ENCODE measurements at regions of chr3 and their contacts with region 1.

Region 1: GRCh38 chr3:4906107-4906621 is 73.1 kb upstream of the BHLHE40 start:
- DNase-seq: peak; percentile 72
- H3K4me3 Mint-ChIP-seq: no peak overlapping the region
- H3K27ac Mint-ChIP-seq: peak overlapping the region; percentile 72
- H3K4me1 Mint-ChIP-seq: peaks cover 70% of the 10 kb centered on the region
- H3K27me3 Mint-ChIP-seq: no peaks in the 10 kb centered on the region

Region 2: GRCh38 chr3:4421121-4421520 is 485.0 kb before region 1 on chr3:
- CTCF ChIA-PET with region 1: no interaction called
- POLR2A ChIA-PET with region 1: no interaction called
- intact Hi-C with region 1: loop called (anchors 5 kb)
- DNase-seq: peak; percentile 60
- H3K4me3 Mint-ChIP-seq: no peak overlapping the region
- H3K27ac Mint-ChIP-seq: peak overlapping the region; percentile 56
- H3K4me1 Mint-ChIP-seq: peaks cover 53% of the 10 kb centered on the region
- H3K27me3 Mint-ChIP-seq: no peaks in the 10 kb centered on the region

Region 3: GRCh38 chr3:4741404-4742307 is 164.5 kb before region 1 on chr3:
- CTCF ChIA-PET with region 1: no interaction called
- POLR2A ChIA-PET with region 1: no interaction called
- intact Hi-C with region 1: loop called (anchors 5 kb)
- DNase-seq: peak; percentile 52
- H3K4me3 Mint-ChIP-seq: peak overlapping the region; percentile 3
- H3K27ac Mint-ChIP-seq: peak overlapping the region; percentile 85
- H3K4me1 Mint-ChIP-seq: peaks cover 51% of the 10 kb centered on the region
- H3K27me3 Mint-ChIP-seq: no peaks in the 10 kb centered on the region

Region 4: DNA sequence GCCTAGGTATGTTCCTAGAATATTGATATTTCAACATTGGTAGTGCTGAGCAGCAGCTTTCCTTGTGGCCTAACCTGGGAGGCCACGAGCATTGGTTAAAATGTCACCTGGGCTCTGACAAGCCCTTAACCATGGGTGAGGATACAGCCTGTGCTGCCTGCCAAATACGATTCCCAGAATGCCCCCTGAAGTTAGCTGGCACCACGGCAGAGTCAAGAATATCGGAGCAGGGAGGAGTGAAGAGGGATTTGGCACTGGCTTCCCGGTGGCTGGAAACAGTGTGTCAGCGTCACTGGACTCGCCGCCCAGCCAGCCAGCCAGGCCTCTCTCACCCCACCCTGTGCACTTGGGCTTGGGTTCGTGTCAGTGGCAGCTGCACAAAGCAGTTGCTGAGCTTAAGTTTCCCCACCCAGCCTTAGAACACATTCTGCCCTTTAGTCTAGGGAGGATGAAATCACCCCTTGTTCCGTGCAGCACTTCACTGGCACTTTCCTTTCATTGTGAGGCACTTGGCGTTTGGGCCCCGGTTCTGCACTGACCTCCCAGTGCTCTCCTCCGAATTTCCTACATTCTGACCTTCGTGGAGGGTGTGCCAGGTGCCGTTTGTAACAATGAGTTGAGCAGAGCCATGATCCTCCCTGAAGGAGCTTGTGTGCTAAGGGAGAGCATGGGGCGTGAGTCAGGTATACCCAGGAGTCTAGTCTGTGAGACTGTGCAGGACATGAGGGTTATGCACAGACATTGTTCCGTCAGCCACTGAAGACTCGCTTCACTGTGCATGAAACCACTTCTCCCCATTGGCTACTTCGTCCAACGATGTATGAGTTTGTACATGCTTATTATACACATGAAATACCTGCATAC is 79.7 kb before region 1 on chr3:
- CTCF ChIA-PET with region 1: no interaction called
- POLR2A ChIA-PET with region 1: interaction called, 7 read pairs
- intact Hi-C with region 1: loop called (anchors 1 kb)
- DNase-seq: no peak
- H3K4me3 Mint-ChIP-seq: peak overlapping the region; percentile 70
- H3K27ac Mint-ChIP-seq: peak overlapping the region; percentile 85
- H3K4me1 Mint-ChIP-seq: peaks cover 94% of the 10 kb centered on the region
- H3K27me3 Mint-ChIP-seq: no peaks in the 10 kb centered on the region

Region 5: DNA sequence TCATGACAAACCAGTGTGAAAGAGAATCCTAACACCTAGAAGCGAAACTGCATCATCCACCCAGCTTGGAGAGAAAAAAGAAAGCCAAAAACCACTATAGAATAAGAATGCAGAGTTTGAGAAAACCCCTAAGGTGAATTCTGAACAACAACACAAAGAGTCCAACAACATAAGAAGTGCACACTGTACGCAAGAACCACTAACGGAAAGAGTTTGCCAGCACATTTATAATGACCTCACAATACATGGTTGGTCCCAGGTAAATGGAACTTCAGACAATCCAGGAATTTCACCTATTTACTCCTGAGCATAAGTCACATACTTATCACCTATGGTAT is 55.3 kb before region 1 on chr3:
- CTCF ChIA-PET with region 1: no interaction called
- POLR2A ChIA-PET with region 1: interaction called, 9 read pairs
- intact Hi-C with region 1: loop called (anchors 1 kb)
- DNase-seq: peak; percentile 43
- H3K4me3 Mint-ChIP-seq: peak overlapping the region; percentile 53
- H3K27ac Mint-ChIP-seq: peak overlapping the region; percentile 88
- H3K4me1 Mint-ChIP-seq: peaks cover 88% of the 10 kb centered on the region
- H3K27me3 Mint-ChIP-seq: no peaks in the 10 kb centered on the region

Region 6: DNA sequence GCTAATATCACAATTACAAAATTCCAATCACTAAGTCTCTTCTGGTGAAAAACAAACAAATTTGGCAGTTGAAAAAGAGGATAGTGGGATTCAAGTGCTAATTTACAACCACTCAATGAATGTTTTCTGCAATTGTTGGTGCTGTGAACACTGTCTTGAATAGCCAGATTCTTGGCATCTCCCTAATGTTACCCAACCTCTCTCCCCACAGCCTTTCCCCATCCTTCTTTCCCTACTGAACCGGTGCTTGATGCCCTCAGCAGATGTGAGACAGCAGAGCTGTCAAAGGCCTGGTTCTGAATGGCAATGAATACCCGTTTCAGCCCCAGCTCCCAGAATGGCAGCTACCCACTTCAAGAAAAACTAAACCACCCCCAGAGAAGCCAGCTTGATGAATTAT is 50.6 kb after region 1 on chr3:
- CTCF ChIA-PET with region 1: no interaction called
- POLR2A ChIA-PET with region 1: no interaction called
- intact Hi-C with region 1: no loop called
- DNase-seq: no peak
- H3K4me3 Mint-ChIP-seq: no peak overlapping the region
- H3K27ac Mint-ChIP-seq: no peak overlapping the region
- H3K4me1 Mint-ChIP-seq: no peaks in the 10 kb centered on the region
- H3K27me3 Mint-ChIP-seq: no peaks in the 10 kb centered on the region

Region 7: DNA sequence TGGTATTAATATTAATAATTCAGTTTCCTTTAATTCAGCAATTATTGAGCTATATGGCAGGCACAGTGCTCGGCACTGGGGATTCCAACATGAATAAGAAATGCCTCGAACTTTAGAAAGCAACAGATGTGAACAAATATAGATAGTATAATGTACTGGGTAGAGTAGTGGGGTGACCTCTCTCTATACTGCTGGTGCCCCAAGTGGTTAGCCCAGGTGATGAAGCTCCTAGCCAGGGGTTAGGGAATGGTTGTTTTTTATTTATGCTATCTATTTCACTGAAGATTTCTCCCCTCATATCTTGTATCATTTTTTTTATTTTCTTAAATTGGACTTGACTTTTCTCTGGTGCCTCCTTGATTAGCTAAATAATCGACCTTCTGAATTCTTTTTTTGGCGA is 135.2 kb after region 1 on chr3:
- CTCF ChIA-PET with region 1: no interaction called
- POLR2A ChIA-PET with region 1: no interaction called
- intact Hi-C with region 1: no loop called
- DNase-seq: no peak
- H3K4me3 Mint-ChIP-seq: no peak overlapping the region
- H3K27ac Mint-ChIP-seq: no peak overlapping the region
- H3K4me1 Mint-ChIP-seq: peaks cover 19% of the 10 kb centered on the region
- H3K27me3 Mint-ChIP-seq: no peaks in the 10 kb centered on the region

Region 8: GRCh38 chr3:5057857-5058324 is 151.7 kb after region 1 on chr3:
- CTCF ChIA-PET with region 1: interaction called, 3 read pairs
- POLR2A ChIA-PET with region 1: no interaction called
- intact Hi-C with region 1: loop called (anchors 5 kb)
- DNase-seq: peak; percentile 87
- H3K4me3 Mint-ChIP-seq: no peak overlapping the region
- H3K27ac Mint-ChIP-seq: no peak overlapping the region
- H3K4me1 Mint-ChIP-seq: peaks cover 16% of the 10 kb centered on the region
- H3K27me3 Mint-ChIP-seq: peaks cover 8% of the 10 kb centered on the region

Measured in activated CD4-positive, alpha-beta memory T cell treated with anti-CD3 and anti-CD28 coated beads for 36 hours (primary cell).